HCT116 (cell line): ENCODE measurements at regions of chrX and their contacts with region 1.

Region 1: GRCh38 chrX:136162831-136163570 is 15.7 kb downstream of the FHL1 start:
- DNase-seq: peak; percentile 23
- ATAC-seq: peak; percentile 99
- H3K4me3 ChIP-seq: no peak overlapping the region
- H3K27ac ChIP-seq: no peak overlapping the region
- H3K4me1 ChIP-seq: peaks cover 0 to 16% of the 10 kb centered on the region in 2 experiments; a peak in 1 of 4 replicates
- H3K27me3 ChIP-seq: no peaks in the 10 kb centered on the region
- CTCF ChIP-seq: peak; percentile 39 to 72 (median 54); a peak in 5 of 6 replicates
- POLR2A ChIP-seq: no peak
- RAD21 ChIP-seq: peak; percentile 64

Region 2: GRCh38 chrX:134990801-134991481 is 1172.1 kb before region 1 on chrX and contains the start of gene SMIM10:
- CTCF ChIA-PET with region 1: no interaction called
- POLR2A ChIA-PET with region 1: no interaction called
- RAD21 ChIA-PET with region 1: no interaction called
- intact Hi-C with region 1: no loop called
- DNase-seq: no peak
- ATAC-seq: no peak
- H3K4me3 ChIP-seq: no peak within 1 kb of the TSS
- H3K27ac ChIP-seq: no peak within 1 kb of the TSS
- H3K4me1 ChIP-seq: peaks cover 6 to 13% of the 10 kb centered on the region in 2 experiments; a peak in 3 of 4 replicates
- H3K27me3 ChIP-seq: no peaks in the 10 kb centered on the region
- CTCF ChIP-seq: no peak
- POLR2A ChIP-seq: no peak
- RAD21 ChIP-seq: no peak
- total RNA-seq, gene SMIM10: not detected

Region 3: GRCh38 chrX:136268051-136269048 is 105.3 kb after region 1 on chrX:
- CTCF ChIA-PET with region 1: no interaction called
- POLR2A ChIA-PET with region 1: no interaction called
- RAD21 ChIA-PET with region 1: no interaction called
- intact Hi-C with region 1: loop called (anchors 10 kb)
- DNase-seq: peak; percentile 7
- ATAC-seq: peak; percentile 76
- H3K4me3 ChIP-seq: no peak overlapping the region
- H3K27ac ChIP-seq: no peak overlapping the region
- H3K4me1 ChIP-seq: peaks cover 0 to 7% of the 10 kb centered on the region in 2 experiments; a peak in 2 of 4 replicates
- H3K27me3 ChIP-seq: no peaks in the 10 kb centered on the region
- CTCF ChIP-seq: peak; percentile 53 to 67 (median 64); a peak in 5 of 6 replicates
- POLR2A ChIP-seq: no peak
- RAD21 ChIP-seq: peak; percentile 75

Region 4: DNA sequence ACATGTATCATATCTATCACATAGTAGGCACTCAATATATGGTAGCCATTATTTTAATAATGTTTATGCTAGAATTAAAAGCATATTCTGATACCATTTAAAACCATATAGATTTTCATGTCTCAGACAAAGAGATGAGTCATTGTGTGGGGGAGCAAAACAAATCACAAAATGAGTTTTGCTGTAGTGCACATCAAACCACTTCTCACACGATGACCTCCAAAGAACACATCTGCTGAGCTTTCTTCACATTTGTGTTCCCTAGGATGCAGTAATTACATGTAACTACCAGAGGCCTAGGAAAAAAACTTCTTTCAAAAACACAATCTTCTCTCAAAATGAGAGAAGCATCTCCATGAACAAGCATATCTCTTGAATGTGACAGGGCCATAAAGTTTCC is 268.6 kb after region 1 on chrX:
- CTCF ChIA-PET with region 1: no interaction called
- POLR2A ChIA-PET with region 1: no interaction called
- RAD21 ChIA-PET with region 1: no interaction called
- intact Hi-C with region 1: no loop called
- DNase-seq: no peak
- ATAC-seq: no peak
- H3K4me3 ChIP-seq: no peak overlapping the region
- H3K27ac ChIP-seq: no peak overlapping the region
- H3K4me1 ChIP-seq: no peaks in the 10 kb centered on the region
- H3K27me3 ChIP-seq: no peaks in the 10 kb centered on the region
- CTCF ChIP-seq: no peak
- POLR2A ChIP-seq: no peak
- RAD21 ChIP-seq: no peak

Region 5: GRCh38 chrX:136747003-136747986 is 584.3 kb after region 1 on chrX:
- CTCF ChIA-PET with region 1: no interaction called
- POLR2A ChIA-PET with region 1: no interaction called
- RAD21 ChIA-PET with region 1: no interaction called
- intact Hi-C with region 1: no loop called
- DNase-seq: no peak
- ATAC-seq: no peak
- H3K4me3 ChIP-seq: no peak overlapping the region
- H3K27ac ChIP-seq: no peak overlapping the region
- H3K4me1 ChIP-seq: no peaks in the 10 kb centered on the region
- H3K27me3 ChIP-seq: no peaks in the 10 kb centered on the region
- CTCF ChIP-seq: no peak
- POLR2A ChIP-seq: no peak
- RAD21 ChIP-seq: no peak